BJ (cell line): ENCODE measurements at regions of chr7 and their contacts with region 1.

Region 1: DNA sequence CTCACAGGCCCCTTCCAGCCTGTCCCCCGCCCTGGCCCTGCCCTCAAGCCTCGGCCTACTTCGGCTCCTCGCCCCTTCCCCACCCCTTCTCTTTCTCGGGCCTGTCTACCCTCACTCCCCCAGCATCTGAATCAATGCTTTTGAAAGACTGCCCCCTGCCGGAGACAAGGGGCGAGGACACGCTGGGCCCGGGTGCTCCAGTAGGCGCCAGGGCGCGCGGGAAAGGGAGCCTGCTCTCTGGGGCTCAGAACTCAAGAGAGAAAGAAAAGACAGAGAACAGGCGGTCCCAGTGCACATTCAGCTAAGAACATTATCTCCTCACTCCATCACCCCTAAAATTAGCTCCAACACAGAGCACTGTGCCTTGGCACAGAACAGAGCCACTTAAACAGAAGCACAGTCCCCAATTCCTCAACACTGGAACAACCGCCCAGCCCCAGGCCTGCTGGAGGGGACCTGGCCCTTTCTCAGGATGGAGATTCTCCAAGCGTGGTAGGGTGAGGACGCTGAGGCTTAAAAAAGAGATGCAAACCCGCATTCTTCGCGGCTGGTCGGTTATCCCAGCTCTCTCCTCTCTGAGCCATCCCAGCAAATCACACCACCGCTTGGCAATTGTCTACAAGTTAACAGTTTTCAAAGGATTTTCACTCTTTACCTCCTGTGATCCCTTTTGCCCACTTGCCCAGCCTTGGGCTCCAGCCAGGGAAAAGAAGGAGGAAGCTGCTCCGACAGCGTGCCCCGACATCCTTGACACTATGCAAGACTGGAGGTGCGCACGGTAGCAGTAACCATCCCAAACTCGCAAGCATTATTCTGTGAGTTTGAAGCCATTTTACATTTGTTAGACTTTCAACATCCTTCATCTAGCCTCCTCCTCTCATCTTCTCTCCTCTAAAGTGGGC is 2.1 kb downstream of the GIGYF1 start:
- DNase-seq: no peak
- H3K4me3 ChIP-seq: peak overlapping the region; percentile 9; the same call in 1 of the 2 replicates
- H3K27me3 ChIP-seq: no peaks in the 10 kb centered on the region; the same call in 1 of the 2 replicates
- CTCF ChIP-seq: peak; percentile 95

Region 2: DNA sequence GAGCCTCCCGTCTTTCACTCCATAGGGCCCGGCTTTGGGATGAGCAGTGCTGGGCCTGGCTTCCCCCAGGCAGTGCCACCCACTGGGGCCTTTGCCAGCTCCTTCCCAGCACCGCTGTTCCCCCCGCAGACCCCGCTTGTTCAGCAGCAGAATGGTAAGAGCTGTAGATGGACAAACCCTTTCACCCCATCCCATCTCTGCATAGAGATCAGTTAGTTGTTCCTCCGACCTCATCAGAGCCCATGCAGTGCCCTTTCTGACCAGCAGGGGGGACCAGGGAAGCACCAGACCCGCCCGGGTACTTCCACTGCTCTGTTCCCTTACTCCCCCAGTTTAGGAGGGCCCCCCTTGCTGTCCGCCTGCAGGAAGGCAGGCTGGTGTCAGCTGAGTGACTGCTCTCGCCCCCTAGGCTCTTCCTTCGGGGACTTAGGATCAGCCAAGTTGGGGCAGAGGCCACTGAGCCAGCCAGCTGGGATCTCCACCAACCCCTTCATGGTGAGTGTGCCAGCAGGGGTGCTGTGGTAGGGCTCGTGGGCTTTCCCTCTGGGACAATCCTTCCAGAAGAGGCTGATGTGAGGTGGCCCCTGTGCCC is 128.0 kb before region 1 on chr7:
- CTCF ChIA-PET with region 1: interaction called, 162 read pairs
- POLR2A ChIA-PET with region 1: no interaction called
- DNase-seq: no peak
- H3K4me3 ChIP-seq: no peak overlapping the region
- H3K27me3 ChIP-seq: no peaks in the 10 kb centered on the region
- CTCF ChIP-seq: peak; percentile 99

Region 3: DNA sequence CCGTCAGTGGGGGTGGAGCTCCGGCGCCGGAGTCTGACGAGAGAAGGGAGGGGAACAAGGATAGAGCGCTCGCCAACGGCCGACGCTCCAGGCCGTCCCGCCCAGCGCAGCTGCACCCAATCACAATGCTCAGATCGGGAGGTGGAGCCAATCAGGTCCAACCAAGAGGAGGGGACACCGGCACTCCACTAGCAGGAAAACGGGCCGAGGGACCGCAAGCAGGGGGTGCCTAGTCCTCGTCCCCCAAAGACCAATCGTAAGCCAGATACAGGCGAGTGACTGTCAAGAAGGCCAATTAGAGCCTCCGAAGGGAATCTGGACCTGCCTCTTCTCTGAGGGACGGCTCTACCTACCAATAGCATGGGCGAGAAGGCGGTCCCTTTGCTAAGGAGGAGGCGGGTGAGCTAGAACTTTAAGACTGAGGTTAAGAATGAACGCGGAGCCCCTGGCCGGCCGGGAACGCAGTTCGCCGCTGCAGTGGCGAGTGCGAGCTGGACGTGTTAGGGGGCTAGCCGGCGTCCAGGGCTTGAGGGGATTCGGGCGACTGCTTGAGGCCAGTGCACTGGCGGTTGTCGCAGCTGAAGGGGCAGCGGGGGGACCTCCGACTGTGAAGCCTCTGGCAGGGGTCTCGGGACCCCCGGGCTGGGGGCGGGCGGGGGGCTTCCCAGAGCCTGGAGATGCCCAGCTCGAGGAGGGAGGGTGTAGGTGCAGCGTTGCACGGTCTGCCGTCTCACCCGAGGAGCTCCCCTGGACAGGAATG is 105.5 kb before region 1 on chr7 and contains the start of gene FBXO24:
- CTCF ChIA-PET with region 1: interaction called, 42 read pairs
- POLR2A ChIA-PET with region 1: no interaction called
- DNase-seq: peak; percentile 99
- H3K4me3 ChIP-seq: peak within 1 kb of the TSS; percentile 98
- H3K27me3 ChIP-seq: no peaks in the 10 kb centered on the region
- CTCF ChIP-seq: no peak
- polyA plus RNA-seq, gene FBXO24: 0.33 and 0.40 TPM in 2 replicates

Region 4: GRCh38 chr7:100604028-100604975 is 87.6 kb before region 1 on chr7:
- CTCF ChIA-PET with region 1: interaction called, 12 read pairs
- POLR2A ChIA-PET with region 1: interaction called, 4 read pairs
- DNase-seq: no peak
- H3K4me3 ChIP-seq: peak overlapping the region; percentile 46
- H3K27me3 ChIP-seq: no peaks in the 10 kb centered on the region
- CTCF ChIP-seq: peak; percentile 64

Region 5: GRCh38 chr7:100611974-100612729 is 79.8 kb before region 1 on chr7 and contains the start of gene MOSPD3:
- CTCF ChIA-PET with region 1: interaction called, 16 read pairs
- POLR2A ChIA-PET with region 1: no interaction called
- DNase-seq: peak; percentile 98
- H3K4me3 ChIP-seq: peak within 1 kb of the TSS; percentile 83
- H3K27me3 ChIP-seq: no peaks in the 10 kb centered on the region
- CTCF ChIP-seq: no peak
- polyA plus RNA-seq, gene MOSPD3: 5.2 and 15.0 TPM in 2 replicates

Region 6: DNA sequence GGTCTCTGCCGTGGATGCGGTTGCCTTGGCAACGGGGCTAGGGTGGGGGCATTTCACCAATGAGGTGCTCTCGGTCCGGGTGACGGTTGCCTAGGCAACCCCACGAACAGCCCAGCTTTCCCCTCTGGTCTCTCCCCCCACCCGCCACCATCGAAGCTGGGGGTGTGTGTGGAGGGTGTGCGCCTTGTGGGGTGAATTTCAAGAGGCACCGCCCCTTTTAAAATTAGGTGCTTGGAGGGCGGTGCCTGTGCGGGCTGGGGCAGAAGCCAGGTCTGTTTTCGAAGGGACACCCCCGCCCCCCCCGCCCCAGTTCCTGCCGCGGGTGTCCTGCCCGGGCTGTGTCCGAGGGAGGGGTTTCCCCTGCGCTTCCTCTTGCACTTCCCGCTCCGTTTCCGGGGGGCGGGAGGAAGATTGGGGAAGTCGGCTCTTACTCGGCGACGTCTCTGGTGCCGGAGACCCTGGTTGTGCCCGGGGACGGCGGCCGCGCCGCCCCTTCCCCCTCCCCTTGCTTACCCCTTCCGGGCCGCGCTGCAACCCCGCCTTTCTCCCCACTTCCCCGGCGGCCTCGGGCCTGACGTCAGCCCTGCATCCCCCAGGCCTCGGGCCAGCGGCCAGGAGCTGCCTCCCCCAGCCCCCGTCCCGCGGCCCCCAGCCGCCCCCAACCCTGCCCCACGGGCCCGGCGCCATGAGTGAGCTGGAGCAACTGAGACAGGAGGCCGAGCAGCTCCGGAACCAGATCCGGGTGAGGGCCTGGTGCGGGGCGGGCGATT is 16.2 kb before region 1 on chr7:
- CTCF ChIA-PET with region 1: interaction called, 110 read pairs
- POLR2A ChIA-PET with region 1: interaction called, 11 read pairs
- DNase-seq: peak; percentile 12
- H3K4me3 ChIP-seq: peak overlapping the region; percentile 97
- H3K27me3 ChIP-seq: no peaks in the 10 kb centered on the region
- CTCF ChIP-seq: no peak

Region 7: DNA sequence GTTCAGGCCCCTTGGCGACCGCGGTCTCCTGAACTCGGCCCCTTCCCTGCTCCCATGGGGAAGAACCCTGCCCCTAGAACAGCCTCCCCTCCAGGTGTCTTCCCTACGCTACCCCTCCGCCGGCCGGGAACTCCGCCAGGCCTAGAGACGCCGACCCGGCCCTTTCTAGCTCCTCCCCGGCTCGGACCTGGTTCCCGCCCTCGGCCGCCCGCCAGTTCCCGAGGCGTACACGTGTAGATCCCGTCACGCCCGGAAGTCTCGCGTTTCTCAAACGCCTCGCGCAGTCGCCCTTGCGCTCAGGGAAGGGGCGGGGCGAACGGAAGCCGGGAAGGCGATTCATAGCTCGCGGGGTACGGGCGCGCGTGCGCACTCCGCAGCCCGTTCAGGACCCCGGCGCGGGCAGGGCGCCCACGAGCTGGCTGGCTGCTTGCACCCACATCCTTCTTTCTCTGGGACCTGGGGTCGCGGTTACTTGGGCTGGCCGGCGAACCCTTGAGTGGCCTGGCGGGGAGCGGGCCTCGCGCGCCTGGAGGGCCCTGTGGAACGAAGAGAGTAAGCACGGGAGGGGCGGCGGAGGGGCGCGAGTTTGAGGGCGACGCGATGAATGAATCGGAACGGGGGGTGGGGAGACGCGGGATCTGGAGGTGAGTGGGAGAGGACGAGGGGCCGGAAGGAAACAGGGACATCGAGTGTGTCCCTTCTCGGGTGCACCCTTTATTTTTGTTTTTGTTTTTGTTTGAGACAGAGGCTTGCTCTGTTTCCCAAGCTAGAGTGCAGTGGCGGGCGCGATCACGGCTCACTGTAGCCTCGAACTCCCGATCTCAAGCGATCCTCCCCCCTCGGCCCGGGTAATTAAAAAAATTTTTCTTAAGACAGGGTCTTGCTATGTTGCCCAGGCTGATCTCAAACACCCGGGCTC is 14.1 kb after region 1 on chr7 and contains the start of gene POP7:
- CTCF ChIA-PET with region 1: interaction called, 84 read pairs
- POLR2A ChIA-PET with region 1: no interaction called
- DNase-seq: peak; percentile 71
- H3K4me3 ChIP-seq: peak within 1 kb of the TSS; percentile 97
- H3K27me3 ChIP-seq: no peaks in the 10 kb centered on the region
- CTCF ChIP-seq: no peak
- polyA plus RNA-seq, gene POP7: 24.5 and 35.2 TPM in 2 replicates

Region 8: GRCh38 chr7:100965723-100966541 is 274.0 kb after region 1 on chr7:
- CTCF ChIA-PET with region 1: no interaction called
- POLR2A ChIA-PET with region 1: no interaction called
- DNase-seq: no peak
- H3K4me3 ChIP-seq: no peak overlapping the region
- H3K27me3 ChIP-seq: peaks cover 29% of the 10 kb centered on the region
- CTCF ChIP-seq: peak; percentile 76